MCF 10A (cell line): ENCODE measurements at regions of chr11 and their contacts with region 1.

Region 1: DNA sequence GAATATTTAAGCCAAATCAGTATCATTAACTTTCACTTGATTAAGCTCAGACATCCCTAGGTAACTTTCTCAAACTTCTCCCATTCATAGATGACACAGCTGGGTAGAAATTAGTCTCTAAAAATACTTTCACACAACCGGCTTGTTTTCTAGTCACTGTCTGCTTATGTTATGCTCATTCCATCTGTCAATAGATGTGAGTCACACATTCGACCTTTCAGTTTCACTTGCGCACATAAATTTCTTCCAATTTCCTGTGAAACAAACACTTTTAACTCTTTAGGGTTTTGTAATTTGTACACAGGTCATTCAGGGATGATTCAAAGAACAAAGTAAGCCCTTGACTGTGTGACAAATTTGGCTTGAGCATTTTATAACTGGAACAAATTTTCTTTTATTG is 723.0 kb downstream of the KCNA4 start:
- DNase-seq: peak; percentile 55
- H3K4me3 Mint-ChIP-seq: peak overlapping the region; percentile 45
- H3K27ac Mint-ChIP-seq: peak overlapping the region; percentile 5
- H3K4me1 Mint-ChIP-seq: no peaks in the 10 kb centered on the region
- H3K27me3 Mint-ChIP-seq: no peaks in the 10 kb centered on the region
- CTCF ChIP-seq: no peak

Region 2: GRCh38 chr11:29282088-29282487 is 11.7 kb before region 1 on chr11:
- CTCF ChIA-PET with region 1: interaction called, 3 read pairs
- POLR2A ChIA-PET with region 1: interaction called, 15 read pairs
- intact Hi-C with region 1: no loop called
- DNase-seq: peak; percentile 96
- H3K4me3 Mint-ChIP-seq: peak overlapping the region; percentile 8
- H3K27ac Mint-ChIP-seq: peak overlapping the region; percentile 88
- H3K4me1 Mint-ChIP-seq: peaks cover 29% of the 10 kb centered on the region
- H3K27me3 Mint-ChIP-seq: no peaks in the 10 kb centered on the region
- CTCF ChIP-seq: no peak

Region 3: DNA sequence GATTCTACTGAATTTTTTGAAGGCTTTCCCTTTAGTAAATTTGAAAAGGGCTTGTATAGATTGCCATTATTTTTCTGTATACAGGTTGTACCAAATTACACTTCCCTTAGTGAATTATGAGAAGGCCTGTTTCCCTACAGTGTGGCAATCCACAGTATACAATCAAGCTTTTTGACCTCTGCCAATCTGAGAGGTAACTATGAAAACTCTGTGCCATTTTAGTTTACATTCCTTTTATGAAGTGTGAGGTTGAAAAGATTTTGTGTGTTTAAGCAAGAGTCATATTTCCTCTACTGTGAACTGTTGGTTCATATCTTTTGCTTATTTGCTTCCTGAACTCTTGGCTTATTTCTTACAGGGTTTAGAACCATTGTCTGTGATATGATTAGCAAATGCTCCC is 290.5 kb after region 1 on chr11:
- CTCF ChIA-PET with region 1: no interaction called
- POLR2A ChIA-PET with region 1: no interaction called
- intact Hi-C with region 1: no loop called
- DNase-seq: no peak
- H3K4me3 Mint-ChIP-seq: no peak overlapping the region
- H3K27ac Mint-ChIP-seq: no peak overlapping the region
- H3K4me1 Mint-ChIP-seq: no peaks in the 10 kb centered on the region
- H3K27me3 Mint-ChIP-seq: no peaks in the 10 kb centered on the region
- CTCF ChIP-seq: no peak